HCT116 (cell line): ENCODE measurements at regions of chr17 and their contacts with region 1.

Region 1: DNA sequence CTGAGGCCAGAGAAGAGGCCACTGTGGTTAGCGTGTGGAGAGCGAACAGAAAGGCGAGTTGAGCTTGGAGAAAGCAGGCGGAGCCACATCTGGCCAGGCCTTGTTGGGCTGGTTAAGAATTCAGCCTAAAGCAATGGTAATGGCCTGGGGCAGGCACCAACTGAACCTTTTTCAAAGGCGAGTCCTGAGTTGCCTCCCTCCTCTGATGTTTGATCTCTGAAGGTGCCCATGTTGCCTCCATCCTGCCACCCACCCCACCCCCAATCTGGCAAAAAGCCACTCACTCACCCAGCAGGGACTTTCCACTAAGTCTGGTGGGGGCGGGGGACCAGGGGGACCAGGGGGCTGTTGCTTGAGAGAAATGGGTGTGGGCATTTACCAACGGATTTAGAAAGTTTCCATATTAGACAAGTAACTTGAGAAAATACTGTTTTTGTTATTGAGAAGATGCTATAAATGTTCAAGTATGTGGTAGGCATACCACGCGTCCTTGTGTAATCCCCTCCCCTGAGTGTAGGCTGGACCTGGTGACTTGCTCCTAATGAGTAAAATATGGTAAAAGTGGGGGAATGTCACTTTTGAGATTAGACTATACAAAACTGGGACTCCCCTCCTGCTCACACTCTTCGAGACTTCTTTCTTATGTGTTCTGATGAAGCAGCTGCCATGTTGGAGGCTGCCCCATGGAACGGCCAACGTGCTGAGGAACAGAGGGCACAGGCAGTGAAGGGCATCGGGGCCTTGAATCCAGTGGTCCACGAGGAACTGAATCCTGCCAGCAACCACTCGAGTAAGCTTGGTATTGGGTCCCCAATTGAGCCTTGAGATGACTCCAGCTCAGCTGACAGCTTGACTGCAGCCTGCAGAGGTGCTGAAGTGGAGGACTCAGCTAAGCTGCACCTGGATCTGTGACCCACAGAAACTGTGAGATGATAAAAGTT is 29.9 kb upstream of the TNS4 start:
- DNase-seq: no peak
- ATAC-seq: no peak
- H3K4me3 ChIP-seq: no peak overlapping the region
- H3K27ac ChIP-seq: no peak overlapping the region; the same call in 1 of the 2 replicates
- H3K4me1 ChIP-seq: peaks cover 14 to 48% of the 10 kb centered on the region in 2 experiments
- H3K27me3 ChIP-seq: no peaks in the 10 kb centered on the region
- CTCF ChIP-seq: no peak
- POLR2A ChIP-seq: no peak
- RAD21 ChIP-seq: no peak

Region 2: GRCh38 chr17:40362696-40363110 is 168.6 kb before region 1 on chr17:
- CTCF ChIA-PET with region 1: interaction called, 30 read pairs
- POLR2A ChIA-PET with region 1: interaction called, 6 read pairs
- RAD21 ChIA-PET with region 1: interaction called, 5 to 9 read pairs
- intact Hi-C with region 1: loop called (anchors 1 kb)
- DNase-seq: peak; percentile 54
- ATAC-seq: peak; percentile 90
- H3K4me3 ChIP-seq: peak overlapping the region; percentile 42 to 55
- H3K27ac ChIP-seq: peak overlapping the region; percentile 67; the same call in 1 of the 2 replicates
- H3K4me1 ChIP-seq: peaks cover 4 to 31% of the 10 kb centered on the region in 2 experiments; a peak in 3 of 4 replicates
- H3K27me3 ChIP-seq: no peaks in the 10 kb centered on the region
- CTCF ChIP-seq: peak; percentile 80 to 90 (median 87)
- POLR2A ChIP-seq: no peak
- RAD21 ChIP-seq: peak; percentile 88

Region 3: GRCh38 chr17:40417609-40418427 is 113.5 kb before region 1 on chr17 and contains the start of gene TOP2A:
- CTCF ChIA-PET with region 1: interaction called, 31 read pairs
- POLR2A ChIA-PET with region 1: interaction called, 6 read pairs
- RAD21 ChIA-PET with region 1: interaction called, 5 to 6 read pairs
- intact Hi-C with region 1: no loop called
- DNase-seq: peak; percentile 100
- ATAC-seq: peak; percentile 95
- H3K4me3 ChIP-seq: peak within 1 kb of the TSS; percentile 81 to 94
- H3K27ac ChIP-seq: peak within 1 kb of the TSS; percentile 91
- H3K4me1 ChIP-seq: peaks cover 13 to 28% of the 10 kb centered on the region in 2 experiments; a peak in 3 of 4 replicates
- H3K27me3 ChIP-seq: no peaks in the 10 kb centered on the region
- CTCF ChIP-seq: no peak
- POLR2A ChIP-seq: peak; percentile 68
- RAD21 ChIP-seq: no peak
- total RNA-seq, gene TOP2A: 141 TPM

Region 4: GRCh38 chr17:40475234-40475908 is 56.0 kb before region 1 on chr17:
- CTCF ChIA-PET with region 1: interaction called, 28 read pairs
- POLR2A ChIA-PET with region 1: interaction called, 5 read pairs
- RAD21 ChIA-PET with region 1: interaction called, 10 read pairs
- intact Hi-C with region 1: loop called (anchors 2 kb)
- DNase-seq: no peak
- ATAC-seq: no peak; the same call in 1 of the 2 replicates
- H3K4me3 ChIP-seq: no peak overlapping the region
- H3K27ac ChIP-seq: peak overlapping the region; percentile 2; the same call in 1 of the 2 replicates
- H3K4me1 ChIP-seq: peaks cover 10 to 61% of the 10 kb centered on the region in 2 experiments; a peak in 3 of 4 replicates
- H3K27me3 ChIP-seq: no peaks in the 10 kb centered on the region
- CTCF ChIP-seq: no peak
- POLR2A ChIP-seq: no peak
- RAD21 ChIP-seq: no peak